K562 (cell line): ENCODE measurements at regions of chr15 and their contacts with region 1.

Region 1: DNA sequence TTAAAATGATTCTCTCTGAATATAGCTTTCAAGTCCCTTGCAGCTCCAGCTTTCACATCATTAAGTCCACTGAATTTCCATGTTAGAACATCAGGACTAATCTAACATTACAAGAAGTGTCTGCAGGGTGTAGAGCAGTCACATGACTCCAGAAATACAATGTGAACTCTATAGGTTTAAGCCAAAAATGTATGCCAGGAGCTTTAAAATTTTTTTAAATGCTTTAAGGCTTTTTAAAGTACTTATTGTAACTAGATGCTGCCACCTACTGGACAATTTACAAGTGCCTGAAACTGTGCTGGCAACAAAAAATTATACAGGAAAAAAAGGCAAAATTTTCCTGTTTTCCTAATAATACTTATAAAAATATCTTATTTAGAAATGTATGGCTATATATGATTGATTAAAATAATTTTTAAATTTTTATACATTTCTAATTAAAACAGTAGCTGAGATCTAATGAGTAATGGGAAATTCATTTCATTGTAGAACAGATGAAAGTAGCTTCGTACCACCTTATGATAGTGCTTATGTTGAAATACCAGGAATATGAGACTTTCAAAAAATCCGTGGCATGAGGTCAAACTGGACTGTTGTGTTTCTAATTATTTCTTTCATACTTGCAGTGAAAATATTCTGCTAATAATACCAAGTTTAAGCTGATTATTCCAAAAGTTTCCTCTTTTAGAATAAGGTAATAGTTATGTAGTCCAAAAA is 25.7 kb downstream of the FSIP1 start:
- DNase-seq: peak; percentile 22 to 70 (median 23)
- ATAC-seq: peak; percentile 59; the same call in 2 of the 3 replicates
- H3K4me3 ChIP-seq: no peak overlapping the region
- H3K27ac ChIP-seq: no peak overlapping the region
- H3K4me1 ChIP-seq: no peaks in the 10 kb centered on the region
- H3K27me3 ChIP-seq: no peaks in the 10 kb centered on the region
- CTCF ChIP-seq: peak; percentile 54 to 89 (median 63); a peak in 5 of 6 replicates
- EP300 ChIP-seq: no peak
- POLR2A ChIP-seq: no peak
- RAD21 ChIP-seq: peak; percentile 91 to 93

Region 2: DNA sequence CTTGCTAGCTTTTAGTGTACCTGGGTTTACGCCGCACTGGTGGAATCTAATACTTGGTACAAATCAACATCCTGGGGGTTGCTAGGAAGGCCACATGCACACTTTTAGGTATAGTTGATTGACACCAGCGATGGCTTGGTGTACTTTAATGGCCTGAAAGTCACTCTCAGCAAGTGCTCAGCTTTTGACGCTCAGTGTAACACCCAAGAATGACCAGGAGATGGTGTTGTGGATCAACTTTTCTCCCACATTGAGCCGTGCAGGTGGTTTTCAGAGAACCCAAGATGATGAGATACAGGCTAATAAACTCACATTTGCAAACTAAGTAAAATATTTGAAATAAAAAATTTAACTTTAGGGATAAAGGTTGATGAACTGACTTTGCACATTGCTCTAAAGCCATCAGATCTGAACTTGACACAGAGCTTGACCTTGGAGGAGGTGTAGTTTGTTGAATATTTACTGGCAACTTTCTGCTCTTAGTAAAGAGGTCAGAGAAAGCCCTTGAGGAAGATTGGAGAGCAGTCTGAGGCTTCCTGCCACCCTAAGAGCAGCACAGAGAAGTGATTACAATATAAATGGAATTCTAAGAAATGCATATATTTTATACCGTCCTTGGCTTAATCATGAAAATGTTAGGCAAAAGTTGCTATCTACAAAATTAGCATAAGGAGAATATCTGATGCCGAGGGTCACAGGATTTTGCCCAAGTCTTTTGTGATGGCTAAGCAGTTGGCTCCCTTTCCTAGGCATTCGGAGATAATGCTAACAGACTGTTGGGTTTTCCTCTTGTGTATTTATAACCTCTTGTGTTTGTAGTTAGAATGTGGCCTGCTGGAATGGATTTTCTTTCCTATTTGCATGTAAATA is 1048.9 kb before region 1 on chr15:
- CTCF ChIA-PET with region 1: interaction called, 3 read pairs
- POLR2A ChIA-PET with region 1: no interaction called
- in situ Hi-C with region 1: no loop called
- intact Hi-C with region 1: loop called (anchors 5 kb)
- DNase-seq: peak; percentile 51 to 68 (median 62)
- ATAC-seq: peak; percentile 95
- H3K4me3 ChIP-seq: no peak overlapping the region
- H3K27ac ChIP-seq: no peak overlapping the region
- H3K4me1 ChIP-seq: no peaks in the 10 kb centered on the region
- H3K27me3 ChIP-seq: peaks cover 9 to 12% of the 10 kb centered on the region in 2 experiments
- CTCF ChIP-seq: peak; percentile 58 to 78 (median 71)
- EP300 ChIP-seq: no peak
- POLR2A ChIP-seq: no peak
- RAD21 ChIP-seq: peak; percentile 72 to 80

Region 3: DNA sequence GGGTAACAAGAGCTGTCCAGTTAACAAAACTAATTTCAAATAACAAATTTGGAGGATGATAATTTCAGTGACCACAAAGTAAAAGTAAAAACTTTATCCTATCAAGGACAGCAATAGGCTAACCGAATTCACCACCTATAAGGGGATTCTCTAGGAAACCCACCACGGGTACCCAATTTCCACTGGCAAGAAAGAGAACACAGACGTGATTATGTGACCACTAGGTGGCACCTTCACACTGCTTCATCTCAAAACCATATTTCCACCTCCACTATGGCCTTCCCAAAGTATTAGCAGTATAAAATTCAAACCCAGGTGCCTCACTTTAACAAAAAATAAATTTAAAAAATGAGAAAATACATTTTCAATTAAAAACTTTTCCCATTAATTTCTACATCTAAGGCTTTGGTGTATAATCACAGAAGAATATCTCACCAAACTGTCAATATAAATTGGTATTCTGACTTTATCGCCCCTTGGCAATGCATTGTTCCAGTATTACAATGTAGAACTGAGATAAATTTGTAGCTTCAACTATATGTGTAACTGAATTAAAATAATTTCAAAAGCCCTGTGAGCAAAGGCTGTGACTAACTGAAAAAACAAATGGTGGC is 70.9 kb before region 1 on chr15:
- CTCF ChIA-PET with region 1: interaction called, 59 read pairs
- POLR2A ChIA-PET with region 1: interaction called, 4 read pairs
- in situ Hi-C with region 1: loop called (anchors 5 kb)
- intact Hi-C with region 1: loop called (anchors 1 kb)
- DNase-seq: peak; percentile 49 to 78 (median 58)
- ATAC-seq: peak; percentile 94
- H3K4me3 ChIP-seq: no peak overlapping the region
- H3K27ac ChIP-seq: no peak overlapping the region
- H3K4me1 ChIP-seq: peaks cover 0 to 3% of the 10 kb centered on the region in 2 experiments; a peak in 2 of 5 replicates
- H3K27me3 ChIP-seq: no peaks in the 10 kb centered on the region
- CTCF ChIP-seq: peak; percentile 70 to 83 (median 71)
- EP300 ChIP-seq: no peak
- POLR2A ChIP-seq: no peak
- RAD21 ChIP-seq: peak; percentile 93 to 96

Region 4: DNA sequence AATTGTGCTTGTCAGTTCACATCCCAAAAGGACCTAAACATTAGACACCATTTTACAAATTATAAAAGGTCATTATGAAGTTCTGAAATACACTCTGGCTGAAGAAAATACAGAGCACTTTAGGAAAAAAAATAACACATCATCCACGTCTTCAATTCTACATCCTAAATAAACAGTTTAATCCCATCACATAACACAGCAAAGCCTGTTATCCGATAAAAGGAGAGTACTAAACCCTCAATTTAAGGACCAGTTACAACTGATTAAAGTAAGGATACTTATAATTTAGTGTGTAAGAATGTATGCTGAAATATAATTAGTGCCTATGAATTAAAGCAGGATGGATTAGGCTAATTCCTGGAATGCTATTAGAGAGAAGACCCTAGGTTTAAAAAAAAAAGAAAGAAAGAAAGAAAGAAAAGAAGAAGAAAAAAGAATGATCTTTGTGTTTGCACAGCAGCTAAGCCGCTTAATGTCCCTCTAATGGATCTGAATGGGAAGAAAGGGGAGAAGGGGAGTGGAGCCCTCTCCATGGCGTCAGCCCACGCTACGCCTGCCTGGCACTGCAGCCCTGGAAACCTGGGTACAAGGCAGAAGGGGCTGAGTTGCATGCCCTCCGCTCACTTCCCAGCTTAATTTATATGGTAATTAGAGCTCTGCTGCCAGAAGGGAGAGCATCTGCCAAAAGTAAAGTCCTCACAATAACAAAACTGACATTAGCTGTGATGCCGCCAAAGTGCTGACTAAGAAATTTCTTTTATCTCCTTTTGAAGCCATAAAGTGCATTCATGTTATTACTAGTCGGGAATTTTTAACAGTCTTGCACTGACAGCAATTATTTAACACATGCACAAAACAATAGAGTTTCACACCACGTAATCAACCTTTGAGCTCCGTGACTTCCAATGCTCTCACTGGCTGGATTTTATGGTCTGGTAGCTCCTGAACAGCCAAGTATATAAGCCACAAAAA is 64.3 kb before region 1 on chr15:
- CTCF ChIA-PET with region 1: interaction called, 59 read pairs
- POLR2A ChIA-PET with region 1: no interaction called
- in situ Hi-C with region 1: loop called (anchors 5 kb)
- intact Hi-C with region 1: no loop called
- DNase-seq: no peak
- ATAC-seq: no peak
- H3K4me3 ChIP-seq: no peak overlapping the region
- H3K27ac ChIP-seq: no peak overlapping the region
- H3K4me1 ChIP-seq: peaks cover 5 to 6% of the 10 kb centered on the region in 2 experiments; a peak in 4 of 5 replicates
- H3K27me3 ChIP-seq: no peaks in the 10 kb centered on the region
- CTCF ChIP-seq: no peak
- EP300 ChIP-seq: no peak
- POLR2A ChIP-seq: no peak
- RAD21 ChIP-seq: no peak

Region 5: GRCh38 chr15:39744334-39745103 is 12.4 kb before region 1 on chr15:
- CTCF ChIA-PET with region 1: no interaction called
- POLR2A ChIA-PET with region 1: no interaction called
- in situ Hi-C with region 1: no loop called
- intact Hi-C with region 1: no loop called
- DNase-seq: no peak
- ATAC-seq: peak; percentile 58; the same call in 2 of the 3 replicates
- H3K4me3 ChIP-seq: no peak overlapping the region
- H3K27ac ChIP-seq: no peak overlapping the region
- H3K4me1 ChIP-seq: no peaks in the 10 kb centered on the region
- H3K27me3 ChIP-seq: peaks cover 0 to 4% of the 10 kb centered on the region in 2 experiments; a peak in 1 of 5 replicates
- CTCF ChIP-seq: 0 out of 6 replicates have a peak, but pooled peaks of 1 of the 3 experiments have one; percentile 13
- EP300 ChIP-seq: no peak
- POLR2A ChIP-seq: no peak
- RAD21 ChIP-seq: no peak

Region 6: DNA sequence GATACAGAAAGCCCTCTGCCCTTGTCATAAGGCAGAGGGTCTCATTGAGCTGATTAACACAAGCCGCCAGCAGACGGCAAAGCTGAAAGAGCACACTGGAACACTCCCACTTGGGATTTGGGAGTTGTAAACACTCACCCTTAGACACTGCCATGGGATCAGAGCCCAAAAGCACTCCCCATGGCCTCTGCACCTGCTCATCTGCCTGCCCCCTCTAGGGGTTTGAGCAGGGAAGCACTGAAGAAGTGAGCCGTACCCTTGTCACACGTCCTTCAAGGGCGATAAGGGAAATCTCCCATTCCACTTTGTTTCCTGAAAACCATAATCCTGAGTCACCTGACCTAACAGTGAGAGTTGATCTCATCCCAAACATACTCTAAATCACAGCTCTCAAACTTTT is 11.0 kb after region 1 on chr15:
- CTCF ChIA-PET with region 1: no interaction called
- POLR2A ChIA-PET with region 1: no interaction called
- in situ Hi-C with region 1: no loop called
- intact Hi-C with region 1: no loop called
- DNase-seq: no peak
- ATAC-seq: peak; percentile 68; the same call in 2 of the 3 replicates
- H3K4me3 ChIP-seq: no peak overlapping the region
- H3K27ac ChIP-seq: no peak overlapping the region
- H3K4me1 ChIP-seq: no peaks in the 10 kb centered on the region; a peak in 1 of 5 replicates
- H3K27me3 ChIP-seq: no peaks in the 10 kb centered on the region
- CTCF ChIP-seq: no peak
- EP300 ChIP-seq: no peak
- POLR2A ChIP-seq: no peak
- RAD21 ChIP-seq: no peak

Region 7: DNA sequence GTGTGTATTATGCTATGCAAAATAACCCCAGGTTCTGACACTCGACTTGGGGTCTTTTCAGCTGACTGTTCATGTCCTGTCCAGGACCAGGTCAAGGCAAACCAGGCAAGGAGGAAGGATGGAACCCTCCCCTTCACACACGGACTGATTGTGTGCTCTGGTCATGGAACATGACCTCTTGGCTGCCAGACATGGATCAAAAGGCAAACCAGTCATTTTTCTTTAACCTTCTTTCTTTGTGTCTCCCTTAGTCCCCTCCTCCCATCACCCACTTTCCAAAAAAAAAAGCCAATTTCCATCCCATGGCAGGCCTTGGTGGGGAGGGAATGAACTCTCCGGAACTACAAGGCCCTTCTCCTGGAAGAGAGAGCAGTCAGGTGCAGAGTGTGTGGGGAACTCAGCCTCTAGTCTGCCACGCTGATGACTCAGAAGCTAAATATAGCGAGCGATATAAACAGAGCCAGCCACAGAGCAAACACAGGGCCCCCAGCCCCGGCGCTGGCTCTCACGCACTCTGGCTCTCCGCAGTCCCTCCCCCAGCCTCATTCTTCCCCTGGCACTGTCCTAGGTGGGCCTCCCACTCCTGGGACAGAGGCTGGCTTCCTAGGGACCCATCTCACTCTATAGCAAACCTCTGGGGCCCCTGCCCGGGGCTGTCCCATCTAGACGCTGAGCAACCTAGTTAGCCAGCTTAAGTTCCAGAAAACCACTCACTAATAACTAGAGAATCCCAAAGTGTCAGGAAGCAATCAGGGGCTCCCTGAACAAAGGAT is 341.7 kb after region 1 on chr15:
- CTCF ChIA-PET with region 1: no interaction called
- POLR2A ChIA-PET with region 1: no interaction called
- in situ Hi-C with region 1: no loop called
- intact Hi-C with region 1: no loop called
- DNase-seq: peak; percentile 62 to 89 (median 77)
- ATAC-seq: peak; percentile 93
- H3K4me3 ChIP-seq: peak overlapping the region; percentile 9; the same call in 1 of the 2 replicates
- H3K27ac ChIP-seq: peak overlapping the region; percentile 78
- H3K4me1 ChIP-seq: peaks cover 37 to 60% of the 10 kb centered on the region in 2 experiments
- H3K27me3 ChIP-seq: no peaks in the 10 kb centered on the region
- CTCF ChIP-seq: no peak
- EP300 ChIP-seq: peak; percentile 76
- POLR2A ChIP-seq: 0 out of 2 replicates have a peak, but pooled peaks have one; percentile 41
- RAD21 ChIP-seq: 0 out of 4 replicates have a peak, but pooled peaks of 1 of the 2 experiments have one; percentile 11